Activated naive CD4-positive, alpha-beta T cell treated with anti-CD3 and anti-CD28 coated beads for 36 hours (primary cell): ENCODE measurements at regions of chr13 and their contacts with region 1.

Region 1: DNA sequence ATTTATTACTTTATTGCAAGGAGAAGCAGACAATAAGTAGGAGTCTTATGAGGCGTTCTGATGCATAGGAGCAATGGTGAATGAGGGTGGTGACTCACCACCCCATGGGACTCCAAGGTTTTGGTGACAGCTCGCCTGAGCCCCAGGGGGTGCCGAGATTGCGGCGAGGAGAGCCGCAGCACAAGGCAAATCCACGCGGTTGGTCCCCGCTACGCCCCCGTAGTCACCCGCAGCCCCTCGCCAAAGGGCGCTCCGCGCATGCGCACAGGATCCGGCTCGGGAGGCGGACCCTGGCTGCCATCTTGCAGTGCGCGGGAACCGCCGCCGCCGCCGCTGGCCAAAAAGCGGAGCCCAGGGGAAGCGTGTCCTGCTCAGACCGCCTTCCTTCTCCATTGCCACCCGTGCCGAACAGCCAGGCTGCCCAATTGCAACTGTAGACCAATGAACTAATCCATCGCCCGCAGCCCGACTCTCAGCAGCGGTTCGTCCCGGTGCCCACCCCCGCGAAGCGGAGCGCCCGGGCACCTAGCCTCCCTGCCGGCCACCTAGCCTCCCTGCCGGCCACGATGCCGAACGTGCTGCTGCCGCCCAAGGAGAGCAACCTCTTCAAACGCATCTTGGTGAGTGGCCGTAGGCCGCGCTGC is at the start of gene NAA16:
- DNase-seq: peak; percentile 96
- H3K4me3 Mint-ChIP-seq: peak within 1 kb of the TSS; percentile 94
- H3K27ac Mint-ChIP-seq: peak within 1 kb of the TSS; percentile 95
- H3K4me1 Mint-ChIP-seq: peaks cover 31% of the 10 kb centered on the region
- H3K27me3 Mint-ChIP-seq: no peaks in the 10 kb centered on the region
- total RNA-seq, gene NAA16: 29.6 to 31.5 TPM

Region 2: DNA sequence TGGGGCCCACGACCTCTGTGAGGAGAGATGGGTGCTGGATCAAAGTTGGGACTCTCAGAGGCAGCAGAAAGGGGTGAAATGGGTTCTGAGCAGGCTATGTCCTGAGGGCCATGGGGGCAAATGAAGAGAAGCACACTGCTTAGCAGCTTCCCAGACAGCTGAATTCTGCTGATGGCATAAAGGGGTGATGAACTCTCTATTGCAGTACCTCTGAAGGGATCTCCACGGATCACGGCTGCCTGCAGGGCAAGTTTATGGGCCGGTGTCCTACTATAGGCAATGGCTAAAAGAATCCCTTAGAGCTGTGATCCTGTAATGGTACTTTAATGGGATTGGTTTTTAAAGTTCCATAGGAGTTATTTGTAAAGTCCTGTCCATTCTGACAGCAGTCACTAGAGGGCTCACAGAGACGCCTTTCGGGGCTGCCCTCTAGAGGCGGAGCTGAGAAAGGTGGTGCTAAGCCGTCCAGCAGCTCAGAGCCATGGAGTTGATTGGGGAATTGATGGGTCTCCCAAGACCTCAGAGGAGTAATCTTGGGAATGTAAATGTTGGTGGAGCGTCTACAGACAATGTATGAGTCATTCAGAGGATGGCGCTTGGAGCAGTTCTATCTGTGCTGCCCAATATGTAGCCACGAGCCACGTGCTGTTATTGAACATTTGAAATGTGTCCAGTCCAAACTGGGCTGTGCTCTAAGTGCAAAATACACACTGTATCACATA is 1368.4 kb before region 1 on chr13:
- CTCF ChIA-PET with region 1: no interaction called
- intact Hi-C with region 1: no loop called
- DNase-seq: peak; percentile 82
- H3K4me3 Mint-ChIP-seq: no peak overlapping the region
- H3K27ac Mint-ChIP-seq: no peak overlapping the region
- H3K4me1 Mint-ChIP-seq: peaks cover 7% of the 10 kb centered on the region
- H3K27me3 Mint-ChIP-seq: no peaks in the 10 kb centered on the region

Region 3: GRCh38 chr13:40982772-40983171 is 328.3 kb before region 1 on chr13:
- CTCF ChIA-PET with region 1: no interaction called
- intact Hi-C with region 1: loop called (anchors 5 kb)
- DNase-seq: peak; percentile 60
- H3K4me3 Mint-ChIP-seq: peak overlapping the region; percentile 90
- H3K27ac Mint-ChIP-seq: peak overlapping the region; percentile 100
- H3K4me1 Mint-ChIP-seq: peaks cover 55% of the 10 kb centered on the region
- H3K27me3 Mint-ChIP-seq: no peaks in the 10 kb centered on the region

Region 4: GRCh38 chr13:41061075-41061913 is 249.8 kb before region 1 on chr13 and contains the start of gene WBP4:
- CTCF ChIA-PET with region 1: no interaction called
- intact Hi-C with region 1: loop called (anchors 1 kb)
- DNase-seq: peak; percentile 88
- H3K4me3 Mint-ChIP-seq: peak within 1 kb of the TSS; percentile 95
- H3K27ac Mint-ChIP-seq: peak within 1 kb of the TSS; percentile 98
- H3K4me1 Mint-ChIP-seq: peaks cover 45% of the 10 kb centered on the region
- H3K27me3 Mint-ChIP-seq: peaks cover 4% of the 10 kb centered on the region
- total RNA-seq, gene WBP4: 8.1 to 8.2 TPM

Region 5: DNA sequence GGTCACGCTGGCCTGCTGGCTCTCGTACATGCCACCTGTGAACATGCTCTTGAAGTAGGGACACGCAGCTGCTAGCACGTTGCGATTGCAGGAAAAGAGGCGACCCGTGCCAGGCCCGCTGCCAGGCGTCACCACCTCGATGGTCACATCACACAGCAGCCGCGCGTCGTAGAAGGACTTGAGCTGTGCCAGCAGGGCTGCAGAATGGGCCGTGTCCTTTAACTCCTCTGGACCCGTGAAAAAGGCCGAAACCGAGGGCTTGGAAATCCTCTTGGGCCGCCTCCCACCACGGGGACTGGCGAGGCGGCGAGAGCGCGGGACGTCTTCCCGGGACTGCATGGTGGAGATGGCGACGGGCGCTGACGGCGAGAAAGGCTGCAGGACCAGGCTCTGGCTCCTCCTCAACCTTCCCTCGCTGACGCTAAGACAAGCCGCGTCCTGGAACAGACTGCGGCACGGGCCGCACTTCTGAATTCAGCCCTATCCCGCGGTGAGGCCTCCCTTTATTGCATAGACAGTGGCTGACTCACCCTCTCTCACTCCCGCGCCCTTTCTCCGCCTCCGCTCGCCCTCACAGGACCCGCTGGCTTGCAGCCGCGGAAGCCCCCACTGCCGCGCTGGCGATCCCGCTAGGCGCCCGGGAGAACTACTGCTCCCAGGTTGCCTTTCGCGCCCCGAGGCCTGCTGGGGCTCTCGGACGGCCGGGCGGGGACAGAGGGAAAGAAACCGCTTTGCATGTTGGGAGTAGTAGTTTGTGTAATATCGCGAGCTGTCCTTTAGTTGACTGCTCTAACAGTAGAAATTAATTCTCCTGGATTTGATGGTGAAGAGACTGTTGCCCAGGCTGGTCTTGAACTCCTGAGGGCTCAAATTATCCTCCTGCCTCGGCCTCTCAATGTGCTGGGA is 116.9 kb before region 1 on chr13 and contains the start of gene KBTBD7:
- CTCF ChIA-PET with region 1: no interaction called
- intact Hi-C with region 1: loop called (anchors 1 kb)
- DNase-seq: peak; percentile 95
- H3K4me3 Mint-ChIP-seq: peak within 1 kb of the TSS; percentile 90
- H3K27ac Mint-ChIP-seq: peak within 1 kb of the TSS; percentile 89
- H3K4me1 Mint-ChIP-seq: peaks cover 37% of the 10 kb centered on the region
- H3K27me3 Mint-ChIP-seq: no peaks in the 10 kb centered on the region
- total RNA-seq, gene KBTBD7: 4.2 to 4.3 TPM

Region 6: GRCh38 chr13:41271456-41272285 is 39.4 kb before region 1 on chr13:
- CTCF ChIA-PET with region 1: no interaction called
- intact Hi-C with region 1: loop called (anchors 2 kb)
- DNase-seq: peak; percentile 11
- H3K4me3 Mint-ChIP-seq: peak overlapping the region; percentile 46
- H3K27ac Mint-ChIP-seq: peak overlapping the region; percentile 89
- H3K4me1 Mint-ChIP-seq: peaks cover 18% of the 10 kb centered on the region
- H3K27me3 Mint-ChIP-seq: no peaks in the 10 kb centered on the region

Region 7: DNA sequence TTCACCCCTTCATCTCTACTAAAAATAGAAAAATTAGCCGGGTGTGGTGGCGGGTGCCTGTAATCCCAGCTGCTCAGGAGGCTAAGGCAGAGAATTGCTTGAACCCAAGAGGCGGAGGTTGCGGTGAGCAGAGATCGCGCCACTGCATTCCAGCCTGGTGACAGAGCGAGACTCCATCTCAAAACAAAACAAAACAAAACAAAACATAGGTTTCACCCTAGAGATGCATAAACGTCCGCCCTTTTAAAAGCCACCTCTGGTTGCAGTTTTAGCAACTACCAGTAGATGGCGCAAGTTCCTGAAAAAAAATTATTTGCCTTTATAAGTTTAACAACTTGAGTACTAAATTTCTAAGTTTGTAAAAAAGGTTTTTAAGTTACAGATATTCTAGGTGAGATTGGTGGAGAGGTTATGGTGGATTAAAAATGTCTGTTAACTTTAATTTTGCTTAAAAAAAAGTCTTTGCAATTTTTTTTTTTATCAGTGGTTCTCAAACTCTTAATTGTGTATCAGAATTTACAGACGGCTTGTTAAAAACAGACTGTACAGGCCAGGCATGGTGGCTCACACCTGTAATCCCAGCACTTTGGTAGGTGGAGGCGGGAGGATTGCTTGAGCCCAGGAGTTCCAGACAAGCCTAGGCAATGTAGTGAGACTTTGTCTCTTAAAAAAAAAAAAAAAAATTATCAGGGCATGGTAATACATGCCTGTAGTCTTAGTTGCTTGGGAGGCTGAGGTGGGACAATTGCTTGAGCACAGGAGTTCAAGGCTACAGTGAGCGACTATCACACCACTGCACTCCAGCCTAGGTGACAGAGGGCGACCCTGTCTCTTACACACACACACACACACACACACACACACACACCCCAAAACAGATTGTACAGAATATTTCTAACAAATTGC is 42.1 kb after region 1 on chr13:
- CTCF ChIA-PET with region 1: no interaction called
- intact Hi-C with region 1: loop called (anchors 2 kb)
- DNase-seq: peak; percentile 69
- H3K4me3 Mint-ChIP-seq: no peak overlapping the region
- H3K27ac Mint-ChIP-seq: peak overlapping the region; percentile 77
- H3K4me1 Mint-ChIP-seq: peaks cover 57% of the 10 kb centered on the region
- H3K27me3 Mint-ChIP-seq: no peaks in the 10 kb centered on the region

Region 8: GRCh38 chr13:41502673-41503072 is 191.6 kb after region 1 on chr13:
- CTCF ChIA-PET with region 1: no interaction called
- intact Hi-C with region 1: no loop called
- DNase-seq: peak; percentile 53
- H3K4me3 Mint-ChIP-seq: no peak overlapping the region
- H3K27ac Mint-ChIP-seq: no peak overlapping the region
- H3K4me1 Mint-ChIP-seq: peaks cover 65% of the 10 kb centered on the region
- H3K27me3 Mint-ChIP-seq: no peaks in the 10 kb centered on the region

Region 9: GRCh38 chr13:42686165-42686564 is 1375.1 kb after region 1 on chr13:
- CTCF ChIA-PET with region 1: no interaction called
- intact Hi-C with region 1: no loop called
- DNase-seq: no peak
- H3K4me3 Mint-ChIP-seq: no peak overlapping the region
- H3K27ac Mint-ChIP-seq: no peak overlapping the region
- H3K4me1 Mint-ChIP-seq: no peaks in the 10 kb centered on the region
- H3K27me3 Mint-ChIP-seq: peaks cover 8% of the 10 kb centered on the region